ENCODE measurements at regions of chr6 and their contacts with region 1.

Region 1: GRCh38 chr6:157981395-157982296 is at the start of gene SYNJ2:
- DNase-seq: peak; percentile 83
- ATAC-seq: peak; percentile 76
- H3K4me3 ChIP-seq: peak within 1 kb of the TSS; percentile 70 to 88 (median 77)
- H3K27ac ChIP-seq: peak within 1 kb of the TSS; percentile 96
- H3K4me1 ChIP-seq: peaks cover 82% of the 10 kb centered on the region
- H3K27me3 ChIP-seq: peaks cover 6 to 9% of the 10 kb centered on the region in 2 experiments; a peak in 4 of 5 replicates
- CTCF ChIP-seq: peak; percentile 79
- EP300 ChIP-seq: peak; percentile 50 to 77
- POLR2A ChIP-seq: peak in 1 of 2 experiments; percentile 55; a peak in 1 of 4 replicates
- RAD21 ChIP-seq: peak; percentile 88
- total RNA-seq, gene SYNJ2: 39.0 and 39.1 TPM in 2 replicates

Region 2: DNA sequence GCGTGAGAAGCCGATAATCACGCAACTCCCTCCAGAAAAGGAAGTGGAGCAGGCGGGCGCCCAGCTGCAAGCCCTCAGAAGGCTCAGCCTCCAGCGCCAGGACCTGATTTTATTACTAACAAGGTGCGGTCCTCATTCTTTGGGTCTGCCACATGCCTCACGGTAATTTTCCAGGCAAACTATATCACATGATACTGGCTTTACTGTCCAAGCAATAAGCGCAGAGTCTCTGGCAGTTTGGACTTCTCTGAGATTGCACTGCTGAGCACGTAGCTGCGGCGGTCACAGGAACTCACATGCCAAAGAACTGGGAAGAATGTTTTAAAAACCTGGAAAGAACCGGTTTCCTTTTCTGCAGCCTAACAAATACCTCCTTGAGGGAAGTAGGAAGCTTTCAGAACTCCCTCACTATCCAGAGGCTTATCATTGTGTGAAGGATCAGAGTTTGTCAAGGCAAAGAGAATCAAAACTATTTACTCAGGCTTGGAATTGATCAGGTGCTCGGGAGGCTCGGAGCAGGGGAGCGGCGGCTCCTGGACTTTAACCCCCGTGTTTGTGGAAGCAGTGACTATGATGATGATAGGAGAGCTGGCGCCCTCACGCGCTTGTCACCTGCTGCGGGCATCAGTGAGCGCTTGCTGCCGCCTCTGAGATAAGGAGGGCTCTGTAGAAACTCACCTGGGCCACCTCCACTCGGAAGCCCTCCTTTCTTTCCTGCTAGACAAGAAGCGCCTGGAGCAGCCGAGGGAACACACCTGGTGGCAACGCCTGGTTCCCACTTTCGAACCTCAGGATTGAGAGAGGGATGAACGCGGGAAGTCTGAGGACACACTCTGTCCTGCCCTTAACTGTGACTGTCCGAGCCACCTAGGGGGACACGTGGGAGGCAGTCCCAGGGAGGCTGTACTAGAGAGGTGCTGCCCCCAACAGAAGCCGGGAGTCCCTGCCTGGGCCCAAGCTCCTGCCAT is 27.2 kb before region 1 on chr6:
- CTCF ChIA-PET with region 1: no interaction called
- POLR2A ChIA-PET with region 1: interaction called, 48 read pairs
- in situ Hi-C with region 1: no loop called
- intact Hi-C with region 1: loop called (anchors 1 kb)
- DNase-seq: peak; percentile 95
- ATAC-seq: peak; percentile 88
- H3K4me3 ChIP-seq: peak overlapping the region; percentile 49 to 72 (median 54)
- H3K27ac ChIP-seq: peak overlapping the region; percentile 87
- H3K4me1 ChIP-seq: peaks cover 50% of the 10 kb centered on the region
- H3K27me3 ChIP-seq: no peaks in the 10 kb centered on the region; a peak in 1 of 5 replicates
- CTCF ChIP-seq: peak; percentile 87
- EP300 ChIP-seq: peak in 1 of 2 experiments; percentile 86; a peak in 3 of 4 replicates
- POLR2A ChIP-seq: peak; percentile 33 to 74; a peak in 3 of 4 replicates
- RAD21 ChIP-seq: peak; percentile 80

Region 3: DNA sequence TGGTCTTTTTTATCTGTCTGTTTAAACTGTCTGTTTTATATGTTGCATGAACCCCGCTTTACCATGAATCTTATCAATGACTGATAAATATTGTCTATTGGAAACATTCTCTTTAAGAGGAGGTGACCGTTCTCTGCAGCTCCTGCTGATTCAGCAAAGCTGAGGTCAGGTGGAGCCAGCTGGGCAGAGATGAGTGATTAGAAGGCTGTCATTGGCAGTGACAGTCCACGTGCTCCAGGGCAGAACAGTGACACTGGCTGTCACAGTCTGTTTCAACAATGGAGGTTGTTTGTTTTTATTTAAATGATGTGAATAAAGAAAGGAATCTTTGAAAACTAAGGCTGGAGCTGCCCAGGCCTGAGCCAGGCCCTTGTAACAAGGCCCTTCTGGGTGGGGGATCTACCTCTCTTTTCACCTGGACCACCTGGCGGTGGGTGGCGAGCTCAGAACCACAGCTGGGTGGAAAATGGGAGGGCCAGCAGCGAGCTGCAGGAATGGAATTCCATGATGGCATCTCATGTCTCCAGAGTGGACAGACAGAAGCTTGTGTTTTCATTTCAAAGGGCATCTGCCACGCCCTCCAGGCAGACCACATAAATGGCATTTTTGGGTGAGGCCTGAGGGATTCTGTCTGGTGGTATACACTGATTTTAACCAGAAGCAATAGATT is 12.6 kb after region 1 on chr6:
- CTCF ChIA-PET with region 1: no interaction called
- POLR2A ChIA-PET with region 1: interaction called, 21 read pairs
- in situ Hi-C with region 1: no loop called
- intact Hi-C with region 1: no loop called
- DNase-seq: peak; percentile 69
- ATAC-seq: peak; percentile 8; the same call in 2 of the 3 replicates
- H3K4me3 ChIP-seq: no peak overlapping the region
- H3K27ac ChIP-seq: peak overlapping the region; percentile 49
- H3K4me1 ChIP-seq: peaks cover 96% of the 10 kb centered on the region
- H3K27me3 ChIP-seq: no peaks in the 10 kb centered on the region
- CTCF ChIP-seq: no peak
- EP300 ChIP-seq: no peak
- POLR2A ChIP-seq: no peak
- RAD21 ChIP-seq: no peak

Region 4: GRCh38 chr6:158002951-158003853 is 21.6 kb after region 1 on chr6:
- CTCF ChIA-PET with region 1: no interaction called
- POLR2A ChIA-PET with region 1: interaction called, 345 read pairs
- in situ Hi-C with region 1: no loop called
- intact Hi-C with region 1: no loop called
- DNase-seq: no peak
- ATAC-seq: no peak
- H3K4me3 ChIP-seq: no peak overlapping the region
- H3K27ac ChIP-seq: peak overlapping the region; percentile 28
- H3K4me1 ChIP-seq: peaks cover 99% of the 10 kb centered on the region
- H3K27me3 ChIP-seq: no peaks in the 10 kb centered on the region
- CTCF ChIP-seq: no peak
- EP300 ChIP-seq: no peak
- POLR2A ChIP-seq: no peak
- RAD21 ChIP-seq: no peak

Region 5: GRCh38 chr6:158031381-158032353 is 50.0 kb after region 1 on chr6:
- CTCF ChIA-PET with region 1: interaction called, 3 read pairs
- POLR2A ChIA-PET with region 1: interaction called, 5 read pairs
- in situ Hi-C with region 1: no loop called
- intact Hi-C with region 1: loop called (anchors 1 kb)
- DNase-seq: no peak
- ATAC-seq: no peak
- H3K4me3 ChIP-seq: no peak overlapping the region
- H3K27ac ChIP-seq: peak overlapping the region; percentile 25
- H3K4me1 ChIP-seq: peaks cover 66% of the 10 kb centered on the region
- H3K27me3 ChIP-seq: no peaks in the 10 kb centered on the region
- CTCF ChIP-seq: no peak
- EP300 ChIP-seq: no peak
- POLR2A ChIP-seq: peak in 1 of 2 experiments; percentile 29; a peak in 2 of 4 replicates
- RAD21 ChIP-seq: no peak

Region 6: GRCh38 chr6:158040051-158040803 is 58.6 kb after region 1 on chr6:
- CTCF ChIA-PET with region 1: no interaction called
- POLR2A ChIA-PET with region 1: interaction called, 23 read pairs
- in situ Hi-C with region 1: no loop called
- intact Hi-C with region 1: loop called (anchors 1 kb)
- DNase-seq: peak; percentile 99
- ATAC-seq: peak; percentile 84
- H3K4me3 ChIP-seq: peak overlapping the region in 2 of 3 experiments; percentile 7 to 51; a peak in 2 of 6 replicates
- H3K27ac ChIP-seq: peak overlapping the region; percentile 92
- H3K4me1 ChIP-seq: peaks cover 87% of the 10 kb centered on the region
- H3K27me3 ChIP-seq: no peaks in the 10 kb centered on the region
- CTCF ChIP-seq: no peak
- EP300 ChIP-seq: peak; percentile 59 to 97; a peak in 3 of 4 replicates
- POLR2A ChIP-seq: peak; percentile 35 to 77; a peak in 3 of 4 replicates
- RAD21 ChIP-seq: no peak

Region 7: DNA sequence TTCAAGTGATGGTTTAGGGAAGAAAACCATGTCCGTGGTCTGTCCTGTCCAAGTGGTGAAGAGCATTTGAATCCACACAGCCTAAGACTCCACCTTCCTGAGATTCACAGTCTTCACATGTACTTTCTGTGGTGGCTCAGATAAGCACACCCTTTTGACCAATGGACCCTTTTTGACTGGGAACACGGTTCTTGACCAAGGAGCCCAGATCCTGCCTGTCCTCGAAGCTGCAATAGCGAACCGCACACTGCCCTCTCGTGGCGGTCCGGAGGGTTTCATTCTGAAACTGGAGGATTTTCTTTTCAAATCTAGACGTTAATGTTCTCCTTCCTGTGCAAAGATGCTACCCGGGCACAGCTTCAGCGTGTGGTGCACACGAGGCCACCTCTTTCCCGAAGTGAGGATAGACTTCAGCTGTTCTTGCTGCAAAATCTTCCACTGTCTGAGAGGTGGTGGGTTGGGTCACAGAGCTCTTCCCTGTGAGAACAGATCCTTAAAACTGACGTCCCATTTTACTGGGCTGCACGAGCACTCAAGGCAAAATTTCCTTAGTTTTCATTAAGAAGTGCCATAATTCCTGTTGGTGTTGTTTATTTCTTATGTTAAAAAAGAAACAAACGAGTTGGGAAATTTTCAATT is 90.6 kb after region 1 on chr6:
- CTCF ChIA-PET with region 1: interaction called, 19 read pairs
- POLR2A ChIA-PET with region 1: interaction called, 10 read pairs
- in situ Hi-C with region 1: loop called (anchors 5 kb)
- intact Hi-C with region 1: loop called (anchors 1 kb)
- DNase-seq: peak; percentile 71
- ATAC-seq: peak; percentile 77
- H3K4me3 ChIP-seq: no peak overlapping the region
- H3K27ac ChIP-seq: peak overlapping the region; percentile 16
- H3K4me1 ChIP-seq: peaks cover 32% of the 10 kb centered on the region
- H3K27me3 ChIP-seq: no peaks in the 10 kb centered on the region
- CTCF ChIP-seq: peak; percentile 97
- EP300 ChIP-seq: no peak
- POLR2A ChIP-seq: no peak
- RAD21 ChIP-seq: peak; percentile 94